ENCODE measurements at regions of chr9 and their contacts with region 1.

Region 1: GRCh38 chr9:68844631-68845612 is 139.9 kb downstream of the PIP5K1B start:
- DNase-seq: peak in 1 of 2 experiments; percentile 71
- H3K4me3 ChIP-seq: no peak overlapping the region
- H3K27ac ChIP-seq: no peak overlapping the region
- H3K4me1 ChIP-seq: peaks cover 0 to 2% (median 0%) of the 10 kb centered on the region in 4 experiments; a peak in 1 of 7 replicates
- H3K27me3 ChIP-seq: no peaks in the 10 kb centered on the region
- CTCF ChIP-seq: peak; percentile 64 to 78 (median 65)
- EP300 ChIP-seq: no peak
- POLR2A ChIP-seq: no peak
- RAD21 ChIP-seq: peak; percentile 65 to 74

Region 2: DNA sequence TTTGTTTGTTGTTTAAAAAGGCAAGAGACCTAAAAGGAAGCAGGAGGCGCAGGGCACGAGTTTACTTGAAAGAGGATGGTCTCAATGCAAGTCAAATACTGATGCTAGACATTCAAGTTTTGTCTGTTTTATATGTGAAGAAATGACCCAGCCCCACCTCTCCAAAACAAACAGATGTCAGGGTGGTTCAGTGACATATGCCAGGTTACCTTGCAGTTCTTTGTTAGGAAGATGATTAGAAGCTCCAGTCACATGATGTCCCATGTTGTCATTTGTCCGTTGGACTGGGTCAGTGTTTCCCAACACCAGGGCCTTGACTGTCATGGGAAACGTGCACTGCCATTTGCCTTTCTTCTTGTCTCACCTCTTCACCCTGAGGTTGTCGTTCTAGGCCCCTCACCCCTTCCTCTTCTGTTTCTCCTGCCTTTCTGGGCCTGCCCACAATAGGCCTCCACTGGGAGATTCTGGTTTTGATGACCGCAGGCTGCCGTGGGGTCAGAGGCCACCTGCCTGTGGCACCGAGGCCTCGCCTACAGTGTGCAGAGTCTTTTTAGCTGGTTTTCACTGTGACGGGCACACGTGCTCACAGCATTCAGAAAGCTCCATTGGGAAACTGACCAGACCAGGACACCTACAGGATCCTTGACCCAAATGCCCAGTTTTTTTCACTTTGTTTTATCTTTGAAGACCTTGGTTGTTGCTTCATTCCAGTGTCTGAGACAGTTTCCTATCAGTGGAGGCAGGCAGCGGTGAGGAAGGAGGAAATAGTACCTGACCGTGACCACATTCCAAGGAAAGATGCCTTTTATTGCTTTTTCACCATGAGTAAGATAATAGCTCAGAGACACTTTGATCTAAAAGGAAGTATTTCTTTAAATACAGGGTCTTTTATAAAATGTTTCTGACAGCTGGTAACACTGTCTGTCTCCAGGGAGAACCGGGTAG is 16.9 kb before region 1 on chr9:
- CTCF ChIA-PET with region 1: interaction called, 18 read pairs
- POLR2A ChIA-PET with region 1: no interaction called
- DNase-seq: no peak
- H3K4me3 ChIP-seq: no peak overlapping the region
- H3K27ac ChIP-seq: no peak overlapping the region
- H3K4me1 ChIP-seq: peaks cover 2 to 19% (median 7%) of the 10 kb centered on the region in 4 experiments; a peak in 4 of 7 replicates
- H3K27me3 ChIP-seq: no peaks in the 10 kb centered on the region
- CTCF ChIP-seq: no peak
- EP300 ChIP-seq: no peak
- POLR2A ChIP-seq: no peak
- RAD21 ChIP-seq: no peak

Region 3: DNA sequence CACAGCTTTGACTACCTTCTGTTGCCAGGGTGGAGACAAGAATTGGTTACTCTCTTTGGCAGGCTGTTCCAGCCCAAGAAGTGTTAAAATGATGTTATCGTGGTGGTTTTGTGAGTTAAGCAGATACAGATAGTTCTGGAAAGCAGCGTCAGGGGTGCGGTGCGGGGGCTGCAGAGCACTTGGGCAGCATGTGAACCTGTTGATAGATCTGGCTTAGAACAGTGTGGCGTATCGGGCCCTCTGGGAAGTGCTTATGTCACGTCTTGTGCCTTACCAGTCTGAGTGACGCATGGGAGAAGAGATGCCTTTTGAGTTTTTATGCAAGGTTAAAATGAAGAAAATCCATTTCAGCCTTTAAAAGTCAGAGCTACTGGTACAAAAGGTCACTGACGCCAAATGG is 16.5 kb after region 1 on chr9:
- CTCF ChIA-PET with region 1: interaction called, 20 read pairs
- POLR2A ChIA-PET with region 1: interaction called, 5 read pairs
- DNase-seq: no peak
- H3K4me3 ChIP-seq: no peak overlapping the region
- H3K27ac ChIP-seq: no peak overlapping the region
- H3K4me1 ChIP-seq: peaks cover 0 to 4% (median 0%) of the 10 kb centered on the region in 4 experiments; a peak in 1 of 7 replicates
- H3K27me3 ChIP-seq: no peaks in the 10 kb centered on the region; a peak in 1 of 7 replicates
- CTCF ChIP-seq: no peak
- EP300 ChIP-seq: no peak
- POLR2A ChIP-seq: no peak
- RAD21 ChIP-seq: no peak

Measured in H1 (cell line).